Ascending aorta (tissue), 2 donors: ENCODE measurements at regions of chr6 and their contacts with region 1.

Region 1: GRCh38 chr6:99119109-99120031 is 171.6 kb upstream of the FBXL4 start:
- DNase-seq: no peak
- H3K4me3 ChIP-seq: no peak overlapping the region
- H3K27ac ChIP-seq: no peak overlapping the region
- H3K4me1 ChIP-seq: no peaks in the 10 kb centered on the region
- H3K27me3 ChIP-seq: no peaks in the 10 kb centered on the region
- CTCF ChIP-seq: peak in 2 of 3 experiments; percentile 54 to 64

Region 2: DNA sequence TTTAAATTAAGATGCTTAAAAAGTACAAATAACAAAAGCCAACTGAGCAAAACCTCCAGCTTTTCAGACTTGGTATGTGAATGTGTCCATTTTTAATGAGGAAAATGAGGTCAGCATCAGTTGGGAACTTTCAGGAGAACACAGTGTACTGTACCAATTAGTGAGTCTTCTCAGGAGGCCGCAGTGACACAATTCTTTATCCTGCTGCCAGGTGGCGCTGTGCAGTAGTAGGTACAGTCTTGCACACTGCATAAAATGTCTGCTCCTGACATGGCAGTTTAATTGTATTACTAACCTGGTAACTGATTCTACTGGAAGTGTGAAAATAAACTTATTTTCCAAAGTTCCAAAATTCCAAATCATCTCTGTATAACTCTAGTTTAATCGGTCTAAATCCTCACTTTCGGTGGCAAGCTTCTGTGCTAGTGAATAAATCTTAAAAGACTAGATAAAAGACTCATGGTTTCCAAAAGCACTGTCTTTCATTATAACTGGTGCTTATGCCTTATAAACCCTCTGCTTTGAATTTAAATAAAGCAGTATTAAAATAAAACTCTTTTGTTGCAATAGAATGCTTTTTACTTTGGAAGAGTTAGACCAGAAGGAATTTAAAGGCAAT is 1621.5 kb before region 1 on chr6:
- intact Hi-C with region 1: loop called (anchors 5 kb)
- DNase-seq: peak in 1 of 2 donors; percentile 65
- H3K4me3 ChIP-seq: no peak overlapping the region
- H3K27ac ChIP-seq: no peak overlapping the region
- H3K4me1 ChIP-seq: no peaks in the 10 kb centered on the region
- H3K27me3 ChIP-seq: no peaks in the 10 kb centered on the region
- CTCF ChIP-seq: peak; percentile 17 to 54 (median 33)